Activated T-helper 1 cell treated with anti-CD3 and anti-CD28 coated beads, Interleukin-12 subunit alpha, Interleukin-12 subunit beta, Interleukin-2, Interleukin-4 antibody, amounts not matched to agents 30 ng/mL and 10 ng/mL and 1 ng/mL, durations not matched to agents 14 hours and 24 hours and 36 hours (primary cell): ENCODE measurements at regions of chr3 and their contacts with region 1.

Region 1: DNA sequence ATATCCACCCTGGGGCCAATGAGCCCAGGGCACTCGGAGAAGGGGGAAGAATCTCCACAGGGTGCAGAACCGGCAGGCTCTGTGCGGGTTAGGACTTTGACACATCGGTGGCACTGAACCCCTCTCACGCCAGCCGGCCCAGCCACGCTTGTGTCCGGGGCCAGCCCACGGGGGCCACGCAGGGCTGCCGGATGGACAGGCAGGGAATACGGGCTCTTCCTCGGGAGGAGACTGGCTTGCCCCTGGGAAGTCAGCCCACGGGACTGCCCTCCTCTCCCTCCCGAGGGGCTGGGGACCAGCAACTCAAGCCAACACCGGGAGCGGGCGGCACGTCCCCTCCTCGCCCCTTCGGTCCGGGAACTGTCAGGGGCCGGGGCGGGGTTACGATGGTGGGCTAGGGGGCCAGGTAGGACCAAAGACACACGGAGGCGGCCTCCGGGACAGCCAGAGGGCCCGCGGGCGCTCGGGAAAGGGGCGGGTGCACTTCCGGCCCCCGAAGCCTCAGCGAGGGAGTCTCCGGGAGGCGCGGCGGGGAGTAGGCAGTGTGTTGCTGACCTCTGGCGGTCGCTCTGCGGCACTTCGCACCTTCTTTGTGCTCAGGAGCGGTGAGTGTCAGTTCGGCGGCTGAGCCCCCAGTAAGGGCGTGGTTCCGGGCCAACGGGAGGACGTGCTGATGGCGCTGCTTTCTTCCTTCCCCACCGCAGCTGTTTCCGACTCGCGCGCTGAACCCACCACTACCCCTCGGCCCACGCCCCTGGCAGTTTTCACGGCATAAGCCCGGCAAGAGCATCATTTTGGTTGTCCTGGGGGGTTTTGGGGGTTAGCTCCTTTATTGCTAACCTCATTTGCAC is 5.1 kb upstream of the CYP8B1 start:
- DNase-seq: peak; percentile 83
- H3K4me3 Mint-ChIP-seq: peak overlapping the region; percentile 82
- H3K27ac Mint-ChIP-seq: peak overlapping the region; percentile 59
- H3K4me1 Mint-ChIP-seq: peaks cover 16% of the 10 kb centered on the region
- H3K27me3 Mint-ChIP-seq: peaks cover 2% of the 10 kb centered on the region

Region 2: DNA sequence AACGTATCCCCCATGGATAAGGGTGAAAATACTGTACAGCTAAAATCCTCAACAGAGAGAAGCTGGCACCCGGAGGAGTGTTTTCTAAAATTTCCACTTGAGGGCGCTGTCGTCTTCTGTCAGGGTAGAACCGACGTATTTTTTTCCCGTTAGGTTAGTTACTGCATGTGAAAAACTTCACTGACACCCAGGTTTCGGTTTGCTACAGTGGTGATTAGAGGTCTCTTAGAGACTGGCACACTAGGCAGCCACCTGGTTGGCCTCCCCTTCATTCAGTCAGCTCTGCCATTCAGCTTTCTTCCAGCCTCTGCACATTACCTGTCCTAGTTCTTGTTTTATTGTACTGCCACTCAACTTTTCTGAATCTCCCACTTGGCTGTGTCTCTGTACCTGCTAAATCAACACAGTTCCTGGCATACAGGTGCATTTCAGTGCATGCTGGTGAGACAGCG is 633.2 kb before region 1 on chr3:
- intact Hi-C with region 1: loop called (anchors 10 kb)
- DNase-seq: peak; percentile 30
- H3K4me3 Mint-ChIP-seq: no peak overlapping the region
- H3K27ac Mint-ChIP-seq: no peak overlapping the region
- H3K4me1 Mint-ChIP-seq: peaks cover 9% of the 10 kb centered on the region
- H3K27me3 Mint-ChIP-seq: peaks cover 33% of the 10 kb centered on the region

Region 3: GRCh38 chr3:42581709-42582473 is 298.9 kb before region 1 on chr3 and contains the start of gene SEC22C:
- intact Hi-C with region 1: loop called (anchors 1 kb)
- DNase-seq: peak; percentile 93
- H3K4me3 Mint-ChIP-seq: peak within 1 kb of the TSS; percentile 90
- H3K27ac Mint-ChIP-seq: peak within 1 kb of the TSS; percentile 93
- H3K4me1 Mint-ChIP-seq: peaks cover 61% of the 10 kb centered on the region
- H3K27me3 Mint-ChIP-seq: peaks cover 1% of the 10 kb centered on the region
- total RNA-seq, gene SEC22C: 37.5 and 38.3 TPM in 2 replicates

Region 4: DNA sequence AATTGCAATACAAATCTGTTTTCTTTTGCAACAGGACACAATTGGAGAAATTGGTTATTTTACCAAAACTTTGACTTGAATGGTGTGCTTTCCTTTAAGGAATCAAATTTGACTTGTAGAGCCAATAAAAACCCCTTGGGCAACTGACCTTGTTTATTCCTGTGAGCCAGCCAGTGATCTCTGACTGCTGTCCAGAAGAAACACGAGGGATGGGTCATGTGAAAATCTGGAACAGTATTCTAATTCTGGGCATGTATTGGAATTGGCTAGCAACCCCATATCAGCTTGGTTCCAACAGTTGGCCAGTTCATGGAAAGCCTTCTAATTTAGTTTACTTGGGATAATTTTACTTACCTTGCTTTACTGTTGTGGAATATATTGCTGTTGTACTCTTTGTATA is 159.1 kb before region 1 on chr3:
- intact Hi-C with region 1: no loop called
- DNase-seq: no peak
- H3K4me3 Mint-ChIP-seq: no peak overlapping the region
- H3K27ac Mint-ChIP-seq: no peak overlapping the region
- H3K4me1 Mint-ChIP-seq: no peaks in the 10 kb centered on the region
- H3K27me3 Mint-ChIP-seq: peaks cover 7% of the 10 kb centered on the region

Region 5: DNA sequence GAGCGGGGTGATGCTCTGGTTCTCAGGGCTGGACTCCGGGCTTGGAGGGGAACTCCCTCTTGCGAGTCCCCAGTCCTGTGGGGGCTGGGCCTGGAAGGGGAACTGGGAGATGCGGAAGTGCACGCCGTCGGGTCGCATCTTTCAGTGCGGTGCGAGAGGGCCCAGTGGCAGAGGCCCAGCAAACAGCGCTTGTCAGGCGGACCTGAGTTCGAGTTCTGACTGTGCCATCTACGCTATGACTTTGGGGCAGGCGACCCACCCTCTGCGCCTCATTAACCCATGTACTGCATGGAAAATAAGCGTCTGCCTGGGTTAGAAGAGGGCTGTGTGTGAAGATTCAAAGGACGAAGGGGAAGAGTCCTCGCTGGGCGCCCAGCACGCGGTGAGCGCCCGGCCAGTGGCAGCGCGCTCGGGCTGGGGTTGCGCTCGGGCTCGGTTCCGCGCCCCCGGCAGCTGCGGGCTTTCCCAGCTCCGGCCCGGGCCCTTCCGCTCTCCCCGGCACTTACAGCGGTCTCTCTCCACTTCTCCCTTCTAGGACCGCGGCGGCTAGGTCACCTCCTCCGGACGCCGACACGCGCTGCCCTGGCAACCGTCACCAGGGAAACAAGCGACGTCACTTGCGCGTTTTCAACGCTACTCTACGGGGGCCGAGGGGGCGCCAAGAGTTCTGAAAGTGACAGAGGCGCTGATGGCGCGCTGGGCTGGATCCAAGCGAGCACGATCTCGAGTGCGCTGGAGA is 108.0 kb before region 1 on chr3 and contains the start of gene CCDC13:
- intact Hi-C with region 1: loop called (anchors 2 kb)
- DNase-seq: peak; percentile 86
- H3K4me3 Mint-ChIP-seq: peak within 1 kb of the TSS; percentile 85
- H3K27ac Mint-ChIP-seq: peak within 1 kb of the TSS; percentile 85
- H3K4me1 Mint-ChIP-seq: peaks cover 12% of the 10 kb centered on the region
- H3K27me3 Mint-ChIP-seq: peaks cover 9% of the 10 kb centered on the region
- total RNA-seq, gene CCDC13: 0.32 TPM in 1 of 2 replicates, not detected in the other

Region 6: DNA sequence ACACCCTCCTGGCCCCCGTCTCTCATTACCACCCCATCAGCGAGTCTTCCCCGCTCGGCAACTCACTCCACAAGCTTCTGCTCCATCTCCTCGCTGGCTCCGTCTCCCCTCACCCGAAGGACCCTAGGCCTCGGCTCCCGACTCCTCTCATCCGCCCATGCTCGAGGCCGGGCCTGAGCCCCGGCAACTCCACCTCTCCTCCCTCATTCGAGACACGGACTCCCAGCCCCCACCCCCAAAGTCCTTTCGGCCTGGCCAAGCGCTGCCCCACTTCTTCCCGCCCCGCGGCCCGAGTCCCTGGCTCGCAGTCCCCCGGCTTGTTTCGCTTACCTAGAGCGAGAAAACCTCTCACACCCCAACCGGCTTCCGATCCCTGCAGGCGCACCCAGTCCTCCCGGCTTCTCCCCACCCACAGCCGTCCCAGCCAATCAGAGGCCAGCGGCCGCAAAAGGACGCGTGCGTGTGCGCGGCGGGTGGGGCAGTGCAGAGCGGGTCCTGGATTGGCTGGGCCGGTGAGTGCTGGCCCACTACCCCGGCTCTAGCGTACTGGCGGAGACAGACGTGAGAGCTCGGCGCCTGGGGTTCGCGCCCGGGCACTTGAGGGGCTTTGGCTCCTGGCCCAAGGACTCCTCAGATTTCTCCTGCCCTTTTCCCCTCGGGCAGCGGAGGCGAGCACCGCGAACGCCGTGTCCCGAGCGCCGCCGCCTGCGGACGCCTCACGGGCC is 76.6 kb before region 1 on chr3 and contains the start of gene HIGD1A:
- intact Hi-C with region 1: loop called (anchors 1 kb)
- DNase-seq: peak; percentile 92
- H3K4me3 Mint-ChIP-seq: peak within 1 kb of the TSS; percentile 99
- H3K27ac Mint-ChIP-seq: peak within 1 kb of the TSS; percentile 90
- H3K4me1 Mint-ChIP-seq: peaks cover 43% of the 10 kb centered on the region
- H3K27me3 Mint-ChIP-seq: peaks cover 27% of the 10 kb centered on the region
- total RNA-seq, gene HIGD1A: 90.1 and 97.5 TPM in 2 replicates